Psoas muscle (tissue), 8 donors: ENCODE measurements at regions of chr16 and their contacts with region 1.

Region 1: GRCh38 chr16:57863434-57864160 is 61.3 kb upstream of the KIFC3 start:
- DNase-seq: peak; percentile 43 to 61
- ATAC-seq: peak; percentile 88 to 99 (median 94)
- H3K4me3 ChIP-seq: no peak overlapping the region
- H3K27ac ChIP-seq: no peak overlapping the region
- H3K4me1 ChIP-seq: peaks cover 6% of the 10 kb centered on the region
- H3K27me3 ChIP-seq: no peaks in the 10 kb centered on the region
- CTCF ChIP-seq: peak; percentile 71

Region 2: GRCh38 chr16:57757326-57757786 is 106.2 kb before region 1 on chr16:
- intact Hi-C with region 1: loop called (anchors 1 to 5 kb)
- DNase-seq: peak; percentile 87 to 93
- ATAC-seq: peak; percentile 88 to 96 (median 92)
- H3K4me3 ChIP-seq: no peak overlapping the region
- H3K27ac ChIP-seq: no peak overlapping the region
- H3K4me1 ChIP-seq: peaks cover 5% of the 10 kb centered on the region
- H3K27me3 ChIP-seq: no peaks in the 10 kb centered on the region
- CTCF ChIP-seq: peak; percentile 98

Region 3: DNA sequence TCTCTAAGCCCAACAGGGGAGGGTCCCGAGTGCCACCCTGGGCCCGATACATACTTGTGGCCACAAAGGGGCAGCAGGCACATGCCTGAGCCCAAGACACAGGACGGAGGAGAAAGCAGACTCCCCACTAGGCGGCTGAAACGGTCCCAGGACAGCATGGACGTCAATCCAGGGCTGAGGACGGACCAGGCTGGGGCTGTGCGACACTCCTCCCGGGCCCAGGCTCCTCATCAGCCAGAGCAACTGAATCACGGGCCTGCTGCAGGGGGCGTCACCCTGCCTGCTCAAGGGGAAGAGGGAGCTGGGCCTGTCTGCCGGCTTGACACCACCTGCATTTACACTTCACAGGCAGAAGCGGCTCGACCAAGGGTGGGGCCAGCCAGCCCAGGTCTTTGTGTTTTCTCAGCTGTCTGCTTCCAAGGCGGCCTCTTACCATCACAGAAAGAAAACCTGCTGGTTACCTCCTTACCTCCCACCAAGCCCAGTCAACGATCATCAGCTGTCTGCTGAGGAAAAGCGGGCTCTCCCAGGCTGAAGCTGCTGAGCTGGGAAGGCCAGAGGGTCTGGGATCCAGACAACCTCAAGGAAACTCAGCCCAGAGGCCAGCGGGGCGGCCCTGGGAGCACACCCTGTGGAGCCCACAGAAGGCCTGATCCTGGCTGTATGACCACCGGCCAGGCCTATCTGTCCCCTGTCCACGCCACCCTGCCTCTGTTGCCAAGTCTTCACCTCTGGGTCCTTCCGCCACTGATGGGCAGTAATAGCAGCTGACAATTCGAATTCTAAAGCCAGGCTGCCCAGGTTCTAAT is 87.7 kb before region 1 on chr16:
- intact Hi-C with region 1: loop called (anchors 1 to 5 kb)
- DNase-seq: peak; percentile 67 to 85
- ATAC-seq: peak; percentile 92 to 99 (median 96)
- H3K4me3 ChIP-seq: no peak overlapping the region
- H3K27ac ChIP-seq: no peak overlapping the region
- H3K4me1 ChIP-seq: no peaks in the 10 kb centered on the region
- H3K27me3 ChIP-seq: no peaks in the 10 kb centered on the region
- CTCF ChIP-seq: peak; percentile 60

Region 4: DNA sequence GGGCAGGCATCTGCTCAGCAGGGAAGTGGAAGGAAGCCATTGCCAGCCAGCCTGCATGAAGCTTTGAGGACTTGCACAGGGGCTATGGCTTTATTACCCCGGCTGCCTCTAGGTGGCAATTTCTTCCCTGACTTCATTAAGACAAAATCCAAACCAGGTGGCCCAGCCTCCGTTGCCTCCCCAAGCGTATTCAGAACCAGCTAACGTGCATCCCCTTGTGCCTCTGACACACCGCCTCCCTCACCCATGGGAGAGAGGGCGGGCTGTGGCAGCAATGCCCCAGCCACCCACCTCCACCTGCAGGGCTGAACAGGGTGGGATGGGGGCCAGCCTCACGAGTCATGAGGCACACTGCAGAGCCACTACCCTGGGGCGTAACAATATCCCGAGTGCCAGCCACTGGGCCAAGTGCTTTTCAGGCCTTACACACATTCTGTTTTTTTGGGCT is 68.1 kb before region 1 on chr16:
- intact Hi-C with region 1: loop called (anchors 5 kb)
- DNase-seq: peak in 1 of 2 donors; percentile 35
- ATAC-seq: peak; percentile 13 to 43 (median 29)
- H3K4me3 ChIP-seq: no peak overlapping the region
- H3K27ac ChIP-seq: no peak overlapping the region
- H3K4me1 ChIP-seq: peaks cover 49% of the 10 kb centered on the region
- H3K27me3 ChIP-seq: no peaks in the 10 kb centered on the region
- CTCF ChIP-seq: peak; percentile 40